Calu3 (cell line): ENCODE measurements at regions of chrX and their contacts with region 1.

Region 1: DNA sequence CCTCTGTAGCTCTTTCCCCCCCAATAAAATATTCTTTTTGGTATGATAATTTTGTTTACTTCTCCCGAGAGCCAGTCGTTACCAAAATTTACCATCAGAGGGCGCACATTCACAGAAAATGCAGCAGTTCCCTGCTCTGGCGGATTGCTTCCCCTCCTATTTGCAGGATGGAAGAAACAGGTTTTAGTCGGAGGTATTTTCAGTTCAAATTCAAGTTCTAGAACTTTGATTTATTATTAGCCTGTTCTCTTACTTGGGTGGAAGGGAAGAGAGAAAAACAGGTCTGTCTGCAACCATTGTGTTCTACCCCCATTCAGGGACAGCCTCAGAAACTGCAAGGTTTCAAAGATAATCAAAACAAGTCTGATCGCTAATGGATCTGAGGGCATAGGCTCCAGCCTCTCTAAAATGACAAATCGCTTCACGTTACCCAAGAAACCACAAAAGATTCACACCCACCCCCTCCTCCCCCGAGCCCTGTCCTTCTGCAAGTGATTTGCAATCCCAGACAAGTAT is 263.8 kb upstream of the RPS6KA3 start:
- DNase-seq: peak; percentile 66
- H3K4me3 Mint-ChIP-seq: no peak overlapping the region
- H3K27ac Mint-ChIP-seq: no peak overlapping the region
- H3K4me1 Mint-ChIP-seq: peaks cover 16% of the 10 kb centered on the region
- H3K27me3 Mint-ChIP-seq: no peaks in the 10 kb centered on the region
- CTCF ChIP-seq: peak; percentile 61

Region 2: DNA sequence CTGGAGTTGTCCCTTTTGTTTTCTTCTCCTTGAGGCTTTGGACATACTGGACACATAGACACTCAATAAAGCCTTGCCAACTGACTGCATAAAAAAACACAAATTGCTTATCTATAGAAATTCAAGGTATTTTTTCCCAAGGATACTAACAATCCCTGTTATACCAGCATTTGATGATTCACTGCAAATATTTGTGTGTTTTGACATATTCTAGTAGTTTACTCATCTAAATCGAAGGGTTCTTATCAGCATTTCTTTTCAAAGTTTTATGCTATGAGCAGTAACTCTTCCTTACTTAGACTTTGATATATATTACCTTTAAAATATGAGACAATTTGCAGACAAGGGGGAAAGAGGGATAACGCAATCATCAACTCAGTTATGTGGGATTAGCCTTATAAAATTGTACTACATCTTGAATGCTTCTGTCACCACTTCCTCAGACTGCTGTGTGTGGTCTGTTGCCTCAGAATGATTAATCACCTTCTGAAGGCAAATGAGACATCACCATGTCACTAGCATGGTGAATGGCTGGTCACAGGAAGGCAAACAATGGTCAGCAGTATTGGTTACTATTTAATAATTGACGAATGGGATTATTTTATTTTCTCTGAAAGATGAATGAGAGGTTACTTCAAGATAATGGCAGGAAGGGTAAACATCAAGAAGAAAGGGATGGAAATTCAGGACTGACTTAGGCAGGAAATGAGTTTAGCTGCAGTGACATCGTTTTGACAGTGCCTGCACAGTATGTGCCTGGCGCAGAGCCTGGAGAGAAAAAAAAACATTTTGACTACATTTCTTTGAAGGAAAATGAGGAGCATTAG is 299.4 kb after region 1 on chrX:
- CTCF ChIA-PET with region 1: no interaction called
- intact Hi-C with region 1: loop called (anchors 10 kb)
- DNase-seq: peak; percentile 24
- H3K4me3 Mint-ChIP-seq: peak overlapping the region; percentile 11
- H3K27ac Mint-ChIP-seq: peak overlapping the region; percentile 75
- H3K4me1 Mint-ChIP-seq: peaks cover 10% of the 10 kb centered on the region
- H3K27me3 Mint-ChIP-seq: no peaks in the 10 kb centered on the region
- CTCF ChIP-seq: no peak

Region 3: GRCh38 chrX:21382715-21383114 is 852.3 kb after region 1 on chrX:
- CTCF ChIA-PET with region 1: no interaction called
- intact Hi-C with region 1: loop called (anchors 10 kb)
- DNase-seq: no peak
- H3K4me3 Mint-ChIP-seq: no peak overlapping the region
- H3K27ac Mint-ChIP-seq: no peak overlapping the region
- H3K4me1 Mint-ChIP-seq: no peaks in the 10 kb centered on the region
- H3K27me3 Mint-ChIP-seq: no peaks in the 10 kb centered on the region
- CTCF ChIP-seq: no peak

Region 4: DNA sequence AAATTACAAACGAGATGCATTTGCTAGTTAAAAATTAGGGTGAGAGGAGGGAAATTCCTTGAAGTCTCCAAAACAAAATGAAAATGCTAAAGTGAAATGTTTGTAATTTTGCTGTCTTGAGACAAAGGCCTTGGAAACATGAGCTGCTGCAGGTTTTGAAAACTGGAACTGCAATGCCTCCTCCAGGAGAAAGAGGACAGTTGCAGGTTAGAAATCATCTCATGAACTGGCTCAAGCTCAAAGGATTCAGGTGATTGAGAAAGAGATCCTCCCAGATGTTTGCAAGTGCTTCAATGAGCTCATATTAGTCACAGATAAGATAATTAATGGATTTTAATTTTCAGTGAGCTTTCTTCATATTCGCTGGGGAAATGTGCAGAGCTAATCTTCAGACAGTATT is 1195.0 kb after region 1 on chrX:
- CTCF ChIA-PET with region 1: interaction called, 5 read pairs
- intact Hi-C with region 1: loop called (anchors 1 kb)
- DNase-seq: no peak
- H3K4me3 Mint-ChIP-seq: no peak overlapping the region
- H3K27ac Mint-ChIP-seq: no peak overlapping the region
- H3K4me1 Mint-ChIP-seq: peaks cover 9% of the 10 kb centered on the region
- H3K27me3 Mint-ChIP-seq: no peaks in the 10 kb centered on the region
- CTCF ChIP-seq: peak; percentile 14